ENCODE measurements at regions of chr9 and their contacts with region 1.

Region 1: DNA sequence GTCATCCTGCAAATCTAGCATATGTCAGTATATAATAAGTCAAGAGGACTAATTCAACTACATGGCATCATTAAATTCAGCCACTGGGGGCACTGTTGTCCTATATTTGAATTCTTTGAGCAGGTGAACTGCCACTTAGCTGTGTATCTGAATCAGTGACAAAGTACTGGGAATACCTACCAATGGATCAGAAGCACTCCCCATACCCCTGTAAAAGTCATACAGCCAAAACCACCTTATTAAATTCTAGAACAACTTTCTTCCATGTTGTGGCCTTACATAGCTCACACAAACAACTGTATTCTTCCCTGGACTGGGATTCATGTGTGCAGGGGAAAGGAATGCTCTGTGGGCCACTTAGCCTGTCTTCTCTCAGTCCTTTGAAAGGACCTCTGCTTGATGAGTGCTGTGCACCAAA is 57.4 kb upstream of the PLPP6 start:
- DNase-seq: peak; percentile 59 to 72 (median 70)
- H3K4me3 ChIP-seq: no peak overlapping the region
- H3K4me3 Mint-ChIP-seq: peak overlapping the region in 3 of 8 donors; percentile 27 to 67 (median 52)
- H3K27ac ChIP-seq: no peak overlapping the region
- H3K27ac Mint-ChIP-seq: peak overlapping the region in 6 of 7 donors; percentile 4 to 85 (median 57)
- H3K4me1 ChIP-seq: peaks cover 24% of the 10 kb centered on the region
- H3K4me1 Mint-ChIP-seq: peaks cover 21 to 50% (median 25%) of the 10 kb centered on the region in 4 donors
- H3K27me3 ChIP-seq: no peaks in the 10 kb centered on the region
- H3K27me3 Mint-ChIP-seq: no peaks in the 10 kb centered on the region

Region 2: GRCh38 chr9:4750023-4750673 is 145.5 kb after region 1 on chr9:
- CTCF ChIA-PET with region 1: interaction called, 5 read pairs
- POLR2A ChIA-PET with region 1: no interaction called
- intact Hi-C with region 1: loop called (anchors 1 kb)
- DNase-seq: peak in 4 of 5 donors; percentile 29 to 42 (median 32)
- H3K4me3 ChIP-seq: no peak overlapping the region
- H3K4me3 Mint-ChIP-seq: no peak overlapping the region
- H3K27ac ChIP-seq: no peak overlapping the region
- H3K27ac Mint-ChIP-seq: no peak overlapping the region
- H3K4me1 ChIP-seq: no peaks in the 10 kb centered on the region
- H3K4me1 Mint-ChIP-seq: peaks cover 4 to 7% (median 5%) of the 10 kb centered on the region in 4 donors
- H3K27me3 ChIP-seq: no peaks in the 10 kb centered on the region
- H3K27me3 Mint-ChIP-seq: no peaks in the 10 kb centered on the region

Measured in CD4-positive, alpha-beta memory T cell (primary cell).